PC-3 (cell line): ENCODE measurements at regions of chr9 and their contacts with region 1.

Region 1: DNA sequence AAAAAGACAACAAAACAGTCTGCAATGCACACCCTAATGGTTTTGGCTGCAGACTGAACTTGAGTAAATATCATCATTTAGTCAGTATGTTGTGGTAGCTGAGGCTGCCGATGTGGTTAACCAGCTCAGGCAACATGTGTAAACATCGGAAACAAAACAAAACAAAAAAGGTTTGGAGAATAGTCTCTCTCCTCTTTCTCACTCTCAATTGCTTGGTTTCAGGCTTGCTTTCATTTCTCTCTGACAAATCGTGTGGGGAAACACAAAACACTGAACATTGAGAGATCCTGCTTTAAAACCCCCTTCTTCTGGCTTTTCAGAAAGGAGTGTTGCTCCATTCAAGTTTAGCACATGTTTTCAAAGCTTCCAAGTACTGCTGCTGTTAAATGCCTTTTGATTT is 453.3 kb downstream of the BNC2 start:
- DNase-seq: peak; percentile 86
- ATAC-seq: peak; percentile 75
- H3K4me3 ChIP-seq: peak overlapping the region; percentile 44
- H3K27ac ChIP-seq: peak overlapping the region; percentile 85
- H3K4me1 ChIP-seq: peaks cover 59% of the 10 kb centered on the region
- H3K27me3 ChIP-seq: no peaks in the 10 kb centered on the region
- CTCF ChIP-seq: no peak

Region 2: GRCh38 chr9:16191691-16192402 is 225.3 kb before region 1 on chr9:
- CTCF ChIA-PET with region 1: no interaction called
- POLR2A ChIA-PET with region 1: no interaction called
- intact Hi-C with region 1: loop called (anchors 5 kb)
- DNase-seq: peak; percentile 74
- ATAC-seq: peak; percentile 91
- H3K4me3 ChIP-seq: no peak overlapping the region
- H3K27ac ChIP-seq: peak overlapping the region; percentile 83
- H3K4me1 ChIP-seq: peaks cover 31% of the 10 kb centered on the region
- H3K27me3 ChIP-seq: no peaks in the 10 kb centered on the region
- CTCF ChIP-seq: peak; percentile 73

Region 3: DNA sequence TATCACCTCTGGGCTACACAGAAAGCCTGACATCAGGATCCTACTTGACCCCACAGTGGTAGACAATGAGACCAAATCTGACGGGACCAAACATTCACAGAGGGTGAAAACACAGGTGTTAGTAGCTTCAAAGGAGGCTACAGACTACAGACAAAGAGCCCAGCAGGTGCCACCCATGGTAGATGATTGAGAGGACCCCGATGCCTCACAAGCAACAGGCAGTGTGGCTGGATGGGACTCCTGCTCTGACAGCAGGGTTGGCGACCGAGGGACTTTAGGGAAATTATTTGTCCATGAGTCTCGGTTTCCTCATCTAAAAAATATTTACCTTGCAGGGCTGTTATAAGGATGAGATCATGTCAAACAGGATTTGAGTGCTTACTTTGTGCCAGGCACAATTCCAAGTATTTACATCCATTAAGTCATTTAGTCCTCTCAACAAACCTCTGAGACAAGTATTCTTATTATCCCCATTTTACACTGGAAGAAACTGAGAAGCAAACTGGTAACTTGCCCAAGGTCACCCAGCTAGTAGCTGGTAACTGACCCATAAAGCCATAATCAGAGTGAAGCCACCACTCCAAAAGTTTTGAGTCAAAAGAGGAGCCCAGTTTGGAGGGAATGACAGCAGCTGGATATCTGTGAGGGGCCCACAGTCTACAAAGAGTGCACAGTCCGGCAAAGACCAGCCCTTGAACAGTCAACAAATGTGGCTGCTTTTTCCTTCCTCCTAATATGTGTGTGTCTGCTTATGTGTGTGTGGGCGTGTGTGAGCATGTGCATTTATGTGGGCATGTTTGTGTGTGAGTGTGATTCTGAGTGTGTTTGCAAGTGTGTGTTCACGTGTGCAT is 48.7 kb before region 1 on chr9:
- CTCF ChIA-PET with region 1: no interaction called
- POLR2A ChIA-PET with region 1: no interaction called
- intact Hi-C with region 1: loop called (anchors 5 kb)
- DNase-seq: peak; percentile 93
- ATAC-seq: peak; percentile 89
- H3K4me3 ChIP-seq: peak overlapping the region; percentile 49
- H3K27ac ChIP-seq: peak overlapping the region; percentile 96
- H3K4me1 ChIP-seq: peaks cover 28% of the 10 kb centered on the region
- H3K27me3 ChIP-seq: no peaks in the 10 kb centered on the region
- CTCF ChIP-seq: no peak

Region 4: DNA sequence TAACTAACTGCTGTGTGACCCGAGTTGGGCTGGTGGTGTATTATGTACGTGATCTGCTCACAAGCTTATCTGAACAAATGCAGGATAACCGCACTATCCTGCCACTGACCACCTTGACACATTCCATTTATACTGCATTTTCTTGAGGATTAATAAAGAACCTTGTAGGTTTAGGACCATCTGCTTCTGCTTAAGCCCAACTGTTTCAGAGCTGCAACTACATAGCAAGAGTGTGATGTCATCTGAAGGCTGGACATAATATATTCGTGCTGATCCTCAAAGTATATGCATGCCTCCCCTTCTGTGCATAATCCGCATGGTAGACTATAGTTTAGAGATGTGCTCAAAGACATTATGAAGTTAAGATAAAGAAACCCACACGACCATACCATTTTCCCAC is 17.4 kb after region 1 on chr9:
- CTCF ChIA-PET with region 1: no interaction called
- POLR2A ChIA-PET with region 1: no interaction called
- intact Hi-C with region 1: no loop called
- DNase-seq: no peak
- ATAC-seq: no peak
- H3K4me3 ChIP-seq: no peak overlapping the region
- H3K27ac ChIP-seq: no peak overlapping the region
- H3K4me1 ChIP-seq: no peaks in the 10 kb centered on the region
- H3K27me3 ChIP-seq: no peaks in the 10 kb centered on the region
- CTCF ChIP-seq: no peak

Region 5: DNA sequence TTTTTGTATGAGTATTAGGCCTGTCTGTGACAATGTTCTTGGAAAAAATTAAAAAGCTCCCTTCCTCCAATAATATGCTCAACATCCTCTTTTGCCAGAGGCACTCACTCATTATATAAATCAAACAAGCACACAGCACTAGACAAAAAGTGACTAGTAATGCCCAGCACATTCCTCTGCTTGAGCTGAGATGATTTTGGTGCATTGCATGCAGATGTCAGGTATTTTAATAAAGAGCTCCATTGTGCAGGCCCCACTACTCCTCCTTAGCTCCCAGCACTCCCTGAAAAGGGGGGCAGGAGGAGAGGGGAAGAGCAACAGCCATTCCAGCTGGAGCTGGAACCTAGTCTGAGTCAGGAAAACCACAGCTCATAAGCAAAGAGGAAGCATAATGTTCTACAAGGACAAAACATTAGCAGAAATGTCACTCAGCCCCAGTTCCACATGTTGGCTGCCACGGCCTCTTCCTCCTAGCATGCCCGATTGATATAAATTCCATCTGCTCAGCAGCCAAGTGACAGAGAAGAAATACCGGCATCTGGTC is 104.8 kb after region 1 on chr9:
- CTCF ChIA-PET with region 1: no interaction called
- POLR2A ChIA-PET with region 1: interaction called, 15 read pairs
- intact Hi-C with region 1: no loop called
- DNase-seq: peak; percentile 84
- ATAC-seq: peak; percentile 90
- H3K4me3 ChIP-seq: no peak overlapping the region
- H3K27ac ChIP-seq: peak overlapping the region; percentile 92
- H3K4me1 ChIP-seq: peaks cover 36% of the 10 kb centered on the region
- H3K27me3 ChIP-seq: no peaks in the 10 kb centered on the region
- CTCF ChIP-seq: no peak